Naive thymus-derived CD4-positive, alpha-beta T cell (primary cell): ENCODE measurements at regions of chr2 and their contacts with region 1.

Region 1: GRCh38 chr2:190369635-190370034 is 26.2 kb downstream of the INPP1 start:
- DNase-seq: no peak
- ATAC-seq: no peak
- H3K4me3 ChIP-seq: no peak overlapping the region
- H3K4me3 Mint-ChIP-seq: no peak overlapping the region
- H3K27ac ChIP-seq: no peak overlapping the region
- H3K27ac Mint-ChIP-seq: no peak overlapping the region
- H3K4me1 ChIP-seq: no peaks in the 10 kb centered on the region
- H3K4me1 Mint-ChIP-seq: peaks cover 0 to 5% (median 0%) of the 10 kb centered on the region in 7 donors
- H3K27me3 ChIP-seq: no peaks in the 10 kb centered on the region
- H3K27me3 Mint-ChIP-seq: no peaks in the 10 kb centered on the region

Region 2: DNA sequence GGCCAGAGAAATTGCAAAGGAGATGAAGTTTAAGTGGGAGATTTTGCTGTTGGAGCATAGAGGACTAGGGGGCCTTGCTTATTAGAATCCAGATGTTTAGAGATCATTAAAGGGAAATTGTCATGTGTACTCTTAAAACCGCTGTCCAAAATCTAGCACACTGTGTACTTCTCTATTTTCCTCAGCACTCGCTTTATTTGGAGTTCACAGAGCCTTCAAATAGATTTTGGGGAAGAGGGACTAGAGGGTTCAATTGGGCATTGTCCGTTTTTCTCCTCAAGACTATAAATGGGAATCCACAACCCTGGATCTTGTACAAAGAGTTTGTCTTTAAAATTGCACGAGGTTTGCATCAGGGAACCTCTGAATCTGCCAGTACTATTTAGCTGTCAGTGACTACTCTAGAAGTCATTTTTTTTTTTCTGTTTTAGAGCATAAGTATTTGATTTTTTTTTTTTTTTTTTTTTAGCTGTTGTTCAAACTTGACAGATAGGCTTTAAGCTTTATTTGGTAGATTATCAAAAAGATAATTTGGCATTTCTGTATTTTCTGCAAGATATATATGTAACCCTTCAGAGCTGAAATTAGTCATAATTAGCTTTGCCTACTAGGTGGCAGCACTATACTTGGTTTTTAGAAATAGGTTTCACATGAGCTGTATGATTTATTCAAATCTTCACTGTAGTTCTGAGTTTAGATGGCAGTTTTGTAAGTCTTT is 571.2 kb before region 1 on chr2:
- CTCF ChIA-PET with region 1: no interaction called
- POLR2A ChIA-PET with region 1: no interaction called
- intact Hi-C with region 1: loop called (anchors 5 kb)
- DNase-seq: no peak
- ATAC-seq: peak; percentile 62
- H3K4me3 ChIP-seq: no peak overlapping the region
- H3K4me3 Mint-ChIP-seq: no peak overlapping the region
- H3K27ac ChIP-seq: no peak overlapping the region
- H3K27ac Mint-ChIP-seq: no peak overlapping the region
- H3K4me1 ChIP-seq: no peaks in the 10 kb centered on the region
- H3K4me1 Mint-ChIP-seq: peaks cover 0 to 8% (median 0%) of the 10 kb centered on the region in 7 donors
- H3K27me3 ChIP-seq: no peaks in the 10 kb centered on the region
- H3K27me3 Mint-ChIP-seq: no peaks in the 10 kb centered on the region

Region 3: GRCh38 chr2:189982777-189983394 is 386.7 kb before region 1 on chr2:
- CTCF ChIA-PET with region 1: no interaction called
- POLR2A ChIA-PET with region 1: no interaction called
- intact Hi-C with region 1: loop called in 1 of 2 experiments (anchors 5 kb)
- DNase-seq: no peak
- ATAC-seq: no peak
- H3K4me3 ChIP-seq: no peak overlapping the region
- H3K4me3 Mint-ChIP-seq: no peak overlapping the region
- H3K27ac ChIP-seq: no peak overlapping the region
- H3K27ac Mint-ChIP-seq: no peak overlapping the region
- H3K4me1 ChIP-seq: no peaks in the 10 kb centered on the region
- H3K4me1 Mint-ChIP-seq: no peaks in the 10 kb centered on the region
- H3K27me3 ChIP-seq: no peaks in the 10 kb centered on the region
- H3K27me3 Mint-ChIP-seq: peaks cover 0 to 15% (median 6%) of the 10 kb centered on the region in 5 donors

Region 4: DNA sequence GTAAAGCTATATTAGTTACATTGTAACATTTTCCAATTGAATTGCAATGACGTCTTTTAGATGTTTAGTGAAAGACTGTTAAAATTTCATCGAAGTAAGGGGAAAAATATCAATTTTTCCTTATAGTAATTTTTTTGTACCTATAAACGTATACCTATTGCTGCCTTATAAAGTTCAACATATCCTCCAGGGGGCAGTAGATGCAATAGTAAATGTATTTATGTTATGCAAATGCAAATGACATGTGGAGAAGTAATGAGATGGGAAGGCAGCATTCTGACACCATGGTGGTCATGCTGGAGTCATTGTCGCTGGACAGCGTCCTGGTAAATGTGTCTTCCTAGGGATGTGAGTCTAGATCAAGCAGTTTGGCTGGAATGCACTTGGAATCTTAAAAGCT is 345.8 kb before region 1 on chr2:
- CTCF ChIA-PET with region 1: no interaction called
- POLR2A ChIA-PET with region 1: no interaction called
- intact Hi-C with region 1: loop called (anchors 1 to 5 kb)
- DNase-seq: peak in 7 of 9 donors; percentile 2 to 32 (median 18)
- ATAC-seq: peak; percentile 54
- H3K4me3 ChIP-seq: no peak overlapping the region
- H3K4me3 Mint-ChIP-seq: no peak overlapping the region
- H3K27ac ChIP-seq: no peak overlapping the region
- H3K27ac Mint-ChIP-seq: no peak overlapping the region
- H3K4me1 ChIP-seq: no peaks in the 10 kb centered on the region
- H3K4me1 Mint-ChIP-seq: no peaks in the 10 kb centered on the region
- H3K27me3 ChIP-seq: no peaks in the 10 kb centered on the region
- H3K27me3 Mint-ChIP-seq: peaks cover 14 to 53% (median 32%) of the 10 kb centered on the region in 5 donors